Activated CD8-positive, alpha-beta T cell treated with anti-CD3 and anti-CD28 coated beads, Interleukin-2, amount 10 ng/mL, durations not matched to agents 7 days and 5 days (primary cell): ENCODE measurements at regions of chr1 and their contacts with region 1.

Region 1: DNA sequence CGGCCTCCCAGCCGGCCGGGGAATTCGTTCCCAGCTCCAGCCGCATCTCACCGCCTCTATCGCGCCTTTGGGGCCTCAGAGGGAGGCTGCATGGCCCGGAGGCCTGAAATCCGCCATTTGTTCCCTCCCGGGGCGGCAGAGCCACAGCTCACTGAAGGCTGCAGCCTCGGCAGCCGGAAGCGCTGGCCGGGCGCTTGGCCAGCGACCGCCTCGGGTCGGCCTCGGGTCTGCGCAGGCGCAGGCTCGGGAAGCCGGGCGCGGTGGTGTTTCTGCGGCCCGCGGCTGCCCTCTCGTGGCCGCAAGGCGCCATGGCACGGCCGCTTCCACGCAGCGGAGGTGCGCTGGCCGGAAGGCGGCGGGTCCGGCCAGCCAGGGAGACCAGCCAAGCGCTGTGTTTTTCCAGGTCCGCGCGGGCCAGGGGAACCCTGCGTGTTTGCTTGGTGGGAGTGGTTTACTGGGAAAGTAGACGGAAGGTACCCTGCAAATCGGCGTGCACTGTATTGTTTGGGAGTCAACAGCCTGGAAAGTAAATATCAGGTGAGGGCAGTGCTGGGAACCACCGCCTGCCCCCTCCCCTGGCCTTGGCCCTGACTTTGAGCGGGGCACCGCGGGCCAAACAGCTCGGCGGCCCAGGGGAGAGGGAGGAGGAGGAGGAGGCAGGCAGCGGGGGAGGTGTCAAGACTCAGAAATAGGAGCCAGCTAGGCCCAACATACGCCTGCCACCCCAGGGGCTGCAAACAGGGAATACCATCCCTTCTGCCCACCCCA is 52.7 kb upstream of the CD34 start:
- DNase-seq: peak; percentile 85
- ATAC-seq: peak; percentile 78
- H3K4me3 Mint-ChIP-seq: peak overlapping the region; percentile 77
- H3K27ac Mint-ChIP-seq: peak overlapping the region; percentile 64
- H3K4me1 Mint-ChIP-seq: peaks cover 15% of the 10 kb centered on the region
- H3K27me3 Mint-ChIP-seq: peaks cover 32% of the 10 kb centered on the region

Region 2: GRCh38 chr1:207828485-207829158 is 135.0 kb before region 1 on chr1:
- CTCF ChIA-PET with region 1: interaction called, 105 read pairs
- POLR2A ChIA-PET with region 1: interaction called, 6 read pairs
- DNase-seq: peak; percentile 64
- ATAC-seq: no peak
- H3K4me3 Mint-ChIP-seq: no peak overlapping the region
- H3K27ac Mint-ChIP-seq: no peak overlapping the region
- H3K4me1 Mint-ChIP-seq: peaks cover 86% of the 10 kb centered on the region
- H3K27me3 Mint-ChIP-seq: no peaks in the 10 kb centered on the region

Region 3: GRCh38 chr1:207876131-207876530 is 87.5 kb before region 1 on chr1:
- CTCF ChIA-PET with region 1: interaction called, 275 read pairs
- POLR2A ChIA-PET with region 1: interaction called, 4 read pairs
- DNase-seq: no peak
- ATAC-seq: no peak
- H3K4me3 Mint-ChIP-seq: no peak overlapping the region
- H3K27ac Mint-ChIP-seq: no peak overlapping the region
- H3K4me1 Mint-ChIP-seq: peaks cover 52% of the 10 kb centered on the region
- H3K27me3 Mint-ChIP-seq: no peaks in the 10 kb centered on the region

Region 4: GRCh38 chr1:207897188-207897587 is 66.4 kb before region 1 on chr1:
- CTCF ChIA-PET with region 1: interaction called, 36 read pairs
- POLR2A ChIA-PET with region 1: no interaction called
- DNase-seq: no peak
- ATAC-seq: no peak
- H3K4me3 Mint-ChIP-seq: no peak overlapping the region
- H3K27ac Mint-ChIP-seq: no peak overlapping the region
- H3K4me1 Mint-ChIP-seq: peaks cover 14% of the 10 kb centered on the region
- H3K27me3 Mint-ChIP-seq: peaks cover 15% of the 10 kb centered on the region

Region 5: DNA sequence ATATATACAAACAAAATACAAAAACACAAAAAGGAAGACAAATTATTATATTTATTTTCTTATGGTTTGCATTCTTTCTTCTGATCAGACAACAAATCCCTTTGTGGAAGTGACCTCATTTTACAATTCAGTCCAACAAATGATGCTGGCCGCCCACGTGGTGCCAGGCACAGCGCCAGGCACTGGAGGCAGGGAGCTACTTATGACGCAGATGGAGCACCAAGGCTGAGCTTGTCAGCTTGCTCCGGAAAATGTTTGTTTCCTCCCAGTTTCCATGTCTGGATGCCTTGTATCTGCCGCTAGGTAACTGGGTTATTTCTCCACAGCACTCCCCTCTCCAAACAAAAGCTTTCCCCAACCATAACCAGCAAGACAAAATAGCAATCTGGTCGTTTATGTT is 21.9 kb before region 1 on chr1:
- CTCF ChIA-PET with region 1: interaction called, 22 read pairs
- POLR2A ChIA-PET with region 1: no interaction called
- DNase-seq: no peak
- ATAC-seq: no peak
- H3K4me3 Mint-ChIP-seq: no peak overlapping the region
- H3K27ac Mint-ChIP-seq: no peak overlapping the region
- H3K4me1 Mint-ChIP-seq: no peaks in the 10 kb centered on the region
- H3K27me3 Mint-ChIP-seq: peaks cover 31% of the 10 kb centered on the region

Region 6: DNA sequence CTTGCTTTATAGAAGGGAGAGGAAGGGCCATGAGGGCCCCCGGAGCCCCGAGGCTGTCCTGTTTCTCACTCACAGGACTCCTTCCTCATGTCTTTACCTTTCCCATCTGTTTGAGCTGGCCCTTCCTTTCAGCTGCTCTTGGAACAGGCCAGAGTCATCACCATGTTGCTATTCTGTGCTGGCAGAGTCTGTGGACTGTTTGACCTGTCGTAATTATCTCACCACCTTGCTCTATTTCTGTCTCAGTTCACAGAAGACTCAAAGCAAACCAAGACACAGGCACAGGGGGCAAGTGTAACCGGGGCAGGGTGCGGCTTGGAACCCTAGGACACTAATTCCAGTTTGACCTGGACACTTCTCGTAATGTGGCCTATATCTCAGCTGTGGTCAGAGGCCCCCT is 51.6 kb after region 1 on chr1:
- CTCF ChIA-PET with region 1: no interaction called
- POLR2A ChIA-PET with region 1: no interaction called
- DNase-seq: no peak
- ATAC-seq: no peak
- H3K4me3 Mint-ChIP-seq: no peak overlapping the region
- H3K27ac Mint-ChIP-seq: no peak overlapping the region
- H3K4me1 Mint-ChIP-seq: no peaks in the 10 kb centered on the region
- H3K27me3 Mint-ChIP-seq: peaks cover 7% of the 10 kb centered on the region